Heart right ventricle (tissue), 16 donors: ENCODE measurements at regions of chr6 and their contacts with region 1.

Region 1: GRCh38 chr6:3977875-3978711 is 100.8 kb downstream of the FAM217A start:
- DNase-seq: peak in 1 of 2 donors; percentile 24
- ATAC-seq: peak; percentile 75 to 92 (median 86)
- H3K4me3 ChIP-seq: no peak overlapping the region
- H3K27ac ChIP-seq: no peak overlapping the region
- H3K4me1 ChIP-seq: peaks cover 0 to 5% (median 0%) of the 10 kb centered on the region in 9 donors
- H3K27me3 ChIP-seq: no peaks in the 10 kb centered on the region
- CTCF ChIP-seq: peak; percentile 22 to 73 (median 64)

Region 2: DNA sequence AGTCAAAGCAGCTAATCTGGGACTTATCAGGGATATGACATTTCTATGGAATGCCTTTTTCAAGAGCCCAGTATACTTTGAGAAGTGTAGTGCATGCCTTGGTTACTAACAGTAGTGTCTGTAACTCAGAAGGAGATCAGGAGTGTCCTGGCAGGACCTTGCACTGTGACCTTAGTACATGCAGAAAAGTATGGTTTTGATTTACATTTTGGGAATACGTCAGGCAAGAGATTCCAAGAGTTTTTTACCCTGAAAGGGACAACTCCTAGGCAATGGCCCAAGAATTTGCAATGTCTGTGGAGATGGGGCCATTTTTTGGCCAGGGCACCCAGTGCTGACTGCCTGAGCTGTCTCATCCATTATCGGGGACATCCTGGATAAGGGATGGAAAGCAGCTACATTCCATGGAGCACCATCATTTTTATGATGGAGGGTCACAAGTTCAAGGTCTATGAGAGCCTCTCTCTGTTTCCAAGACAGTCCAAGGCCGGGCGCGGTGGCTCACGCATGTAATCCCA is 48.8 kb before region 1 on chr6:
- intact Hi-C with region 1: no loop called
- DNase-seq: no peak
- ATAC-seq: peak in 1 of 8 donors; percentile 50
- H3K4me3 ChIP-seq: no peak overlapping the region
- H3K27ac ChIP-seq: peak overlapping the region in 5 of 10 donors; percentile 5 to 56 (median 14)
- H3K4me1 ChIP-seq: peaks cover 0 to 40% (median 9%) of the 10 kb centered on the region in 9 donors
- H3K27me3 ChIP-seq: no peaks in the 10 kb centered on the region
- CTCF ChIP-seq: no peak

Region 3: DNA sequence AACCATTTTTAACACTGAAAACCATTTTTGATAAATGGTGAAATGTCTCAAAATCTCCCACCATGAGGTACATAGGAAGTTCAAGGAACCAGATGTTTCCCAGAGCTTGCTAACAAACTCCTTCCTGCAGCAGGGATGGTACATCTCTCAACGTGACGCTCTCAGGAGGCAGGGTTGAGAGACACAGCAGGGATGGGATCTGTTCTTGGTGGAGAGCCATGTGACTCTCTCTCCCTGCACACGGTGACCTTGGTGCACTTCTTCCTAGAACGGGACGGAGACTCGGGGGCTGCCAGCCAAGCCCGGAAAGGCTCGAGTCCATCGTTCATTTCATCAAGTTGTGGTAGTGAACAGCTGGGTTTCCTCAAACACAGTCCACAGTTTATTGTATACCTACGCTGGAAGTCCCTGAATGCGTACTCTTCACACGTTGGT is 34.7 kb before region 1 on chr6:
- intact Hi-C with region 1: loop called in 1 of 10 experiments (anchors 5 kb)
- DNase-seq: peak; percentile 43 to 49
- ATAC-seq: peak in 1 of 8 donors; percentile 14
- H3K4me3 ChIP-seq: no peak overlapping the region
- H3K27ac ChIP-seq: no peak overlapping the region
- H3K4me1 ChIP-seq: peaks cover 0 to 8% (median 0%) of the 10 kb centered on the region in 9 donors
- H3K27me3 ChIP-seq: peaks cover 0 to 31% (median 0%) of the 10 kb centered on the region in 7 donors
- CTCF ChIP-seq: no peak

Region 4: GRCh38 chr6:4055420-4056041 is 77.4 kb after region 1 on chr6:
- intact Hi-C with region 1: no loop called
- DNase-seq: peak in 1 of 2 donors; percentile 30
- ATAC-seq: peak in 7 of 8 donors; percentile 58 to 92 (median 88)
- H3K4me3 ChIP-seq: no peak overlapping the region
- H3K27ac ChIP-seq: peak overlapping the region in 5 of 10 donors; percentile 7 to 42 (median 26)
- H3K4me1 ChIP-seq: peaks cover 0 to 15% (median 12%) of the 10 kb centered on the region in 9 donors
- H3K27me3 ChIP-seq: no peaks in the 10 kb centered on the region
- CTCF ChIP-seq: peak in 7 of 9 donors; percentile 43 to 71 (median 61)